ENCODE measurements at regions of chr12 and their contacts with region 1.

Region 1: GRCh38 chr12:3777206-3777809 is 24.4 kb upstream of the CRACR2A start:
- DNase-seq: no peak
- ATAC-seq: peak; percentile 65

Region 2: GRCh38 chr12:3299929-3300832 is 477.1 kb before region 1 on chr12:
- intact Hi-C with region 1: loop called (anchors 10 kb)
- DNase-seq: peak; percentile 92
- ATAC-seq: peak; percentile 81

Region 3: DNA sequence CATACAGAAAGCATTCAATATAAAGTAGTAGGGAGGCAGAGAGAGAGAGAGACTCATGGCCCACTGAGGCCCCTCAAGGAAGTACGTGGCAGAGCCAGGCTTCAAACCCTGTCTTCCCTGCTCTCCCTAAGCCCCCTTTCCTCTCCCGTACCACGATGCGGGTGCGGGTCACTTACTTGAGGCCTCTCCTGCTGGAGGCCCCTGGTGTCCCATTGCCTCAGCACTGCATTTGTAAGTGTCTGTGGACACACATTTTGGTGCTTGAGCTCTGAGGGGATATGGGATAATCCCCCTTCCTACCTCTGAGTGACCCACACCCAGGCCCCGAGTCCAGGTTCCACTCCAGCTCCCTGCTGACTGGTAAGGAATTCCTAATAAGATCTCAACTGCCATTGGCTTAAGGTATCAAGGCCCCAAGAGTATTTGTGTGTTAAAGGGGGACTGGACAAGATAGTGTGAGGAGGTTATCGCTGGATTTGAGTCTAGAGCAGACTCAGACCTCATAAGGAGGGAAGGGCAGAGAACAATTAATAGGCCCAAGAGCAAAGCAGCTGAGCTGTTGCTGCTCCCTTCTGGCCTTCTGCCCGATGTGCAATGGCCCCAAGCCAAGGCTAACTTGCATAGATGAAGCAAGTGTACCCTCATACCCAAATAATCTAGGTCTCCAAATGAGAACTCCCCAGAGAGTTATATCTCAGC is 96.3 kb before region 1 on chr12:
- intact Hi-C with region 1: loop called (anchors 10 kb)
- DNase-seq: peak; percentile 84
- ATAC-seq: peak; percentile 23

Measured in left ventricle myocardium superior (tissue), 1 donor.